PC-9 (cell line): ENCODE measurements at regions of chr15 and their contacts with region 1.

Region 1: GRCh38 chr15:34318277-34319079 is 19.1 kb downstream of the SLC12A6 start:
- DNase-seq: peak; percentile 58 to 70
- H3K4me3 ChIP-seq: peak overlapping the region; percentile 63
- H3K27ac ChIP-seq: peak overlapping the region; percentile 38
- H3K4me1 ChIP-seq: 0 out of 2 replicates have a peak, but pooled peaks cover 20% of the 10 kb centered on the region
- H3K27me3 ChIP-seq: no peaks in the 10 kb centered on the region
- CTCF ChIP-seq: no peak

Region 2: GRCh38 chr15:34239151-34239808 is 79.2 kb before region 1 on chr15:
- CTCF ChIA-PET with region 1: no interaction called
- POLR2A ChIA-PET with region 1: no interaction called
- intact Hi-C with region 1: loop called (anchors 5 kb)
- DNase-seq: peak; percentile 58 to 91
- H3K4me3 ChIP-seq: peak overlapping the region; percentile 26; the same call in 1 of the 2 replicates
- H3K27ac ChIP-seq: peak overlapping the region; percentile 99
- H3K4me1 ChIP-seq: peaks cover 24% of the 10 kb centered on the region
- H3K27me3 ChIP-seq: no peaks in the 10 kb centered on the region
- CTCF ChIP-seq: no peak

Region 3: DNA sequence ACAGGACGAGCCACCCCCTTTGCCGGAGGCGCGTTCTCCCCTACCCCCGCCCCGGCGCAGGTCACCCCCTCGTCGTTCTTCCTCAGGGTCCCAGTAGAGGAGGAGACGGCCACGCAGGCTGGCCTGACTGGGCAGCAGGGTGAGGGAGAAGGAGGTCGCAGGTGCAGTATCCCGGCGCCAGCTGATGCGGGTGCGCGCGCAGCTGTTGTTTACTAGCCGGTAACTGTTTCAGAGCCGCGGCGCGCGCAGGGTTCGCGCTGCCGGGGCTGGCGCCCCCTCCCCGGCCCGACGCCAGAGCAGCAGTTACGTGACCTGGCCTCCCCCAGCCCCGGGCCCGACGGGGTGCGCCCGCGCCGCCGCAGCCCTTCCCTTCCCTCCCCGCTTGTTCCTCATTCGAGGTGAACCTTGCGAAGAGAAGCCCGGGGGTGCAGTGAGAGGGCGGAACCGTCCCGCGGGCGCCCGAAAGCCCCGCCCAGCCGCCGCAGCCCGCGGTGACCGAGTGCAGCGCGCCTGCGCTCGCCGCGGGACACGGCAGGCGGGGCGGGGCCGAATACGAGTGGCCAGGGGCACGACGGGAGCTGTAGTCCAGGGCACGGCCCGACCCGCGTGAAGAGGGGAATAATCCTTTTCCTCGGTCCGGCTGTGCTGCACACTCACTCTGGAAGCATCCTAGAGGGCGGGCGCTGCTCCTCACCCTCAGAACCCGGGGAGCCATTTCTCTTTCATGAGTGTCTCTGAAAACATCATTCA is 19.3 kb after region 1 on chr15 and contains the start of gene SLC12A6:
- CTCF ChIA-PET with region 1: interaction called, 5 read pairs
- POLR2A ChIA-PET with region 1: interaction called, 4 read pairs
- intact Hi-C with region 1: loop called (anchors 2 kb)
- DNase-seq: peak; percentile 68 to 90
- H3K4me3 ChIP-seq: peak within 1 kb of the TSS; percentile 86
- H3K27ac ChIP-seq: peak within 1 kb of the TSS; percentile 89
- H3K4me1 ChIP-seq: peaks cover 41% of the 10 kb centered on the region
- H3K27me3 ChIP-seq: no peaks in the 10 kb centered on the region
- CTCF ChIP-seq: no peak
- total RNA-seq, gene SLC12A6: 27.5 and 28.3 TPM in 2 replicates

Region 4: DNA sequence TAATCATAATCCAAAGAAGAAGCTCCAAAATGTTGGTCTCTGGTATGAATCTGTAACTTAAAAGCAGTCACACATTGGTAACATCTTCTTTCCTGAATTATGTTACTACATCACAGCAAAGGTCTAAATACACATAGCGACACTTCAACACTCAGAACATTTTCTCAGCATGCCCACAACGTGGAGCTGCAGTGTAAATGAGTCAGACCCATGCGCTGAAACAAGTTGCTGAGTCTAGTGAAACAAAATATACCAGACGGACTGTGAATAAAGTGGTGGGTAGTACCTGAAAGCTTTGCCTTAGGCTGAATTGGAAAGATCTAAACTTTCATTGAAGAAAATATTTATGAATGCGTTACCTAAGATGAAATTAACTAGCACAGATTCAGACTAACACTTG is 298.1 kb after region 1 on chr15:
- CTCF ChIA-PET with region 1: no interaction called
- POLR2A ChIA-PET with region 1: no interaction called
- intact Hi-C with region 1: no loop called
- DNase-seq: no peak
- H3K4me3 ChIP-seq: no peak overlapping the region
- H3K27ac ChIP-seq: no peak overlapping the region
- H3K4me1 ChIP-seq: no peaks in the 10 kb centered on the region
- H3K27me3 ChIP-seq: no peaks in the 10 kb centered on the region
- CTCF ChIP-seq: no peak